H1 (cell line): ENCODE measurements at regions of chr9 and their contacts with region 1.

Region 1: GRCh38 chr9:93682232-93682968 is 106.0 kb downstream of the PHF2 start:
- DNase-seq: peak; percentile 60 to 99
- H3K4me3 ChIP-seq: no peak overlapping the region
- H3K27ac ChIP-seq: peak overlapping the region; percentile 56; the same call in 1 of the 2 replicates
- H3K4me1 ChIP-seq: no peaks in the 10 kb centered on the region
- H3K27me3 ChIP-seq: no peaks in the 10 kb centered on the region
- CTCF ChIP-seq: peak in 2 of 3 experiments; percentile 82 to 92; a peak in 3 of 4 replicates
- EP300 ChIP-seq: peak in 1 of 2 experiments; percentile 66; a peak in 1 of 3 replicates
- POLR2A ChIP-seq: no peak
- RAD21 ChIP-seq: peak; percentile 95 to 98

Region 2: GRCh38 chr9:93697352-93698139 is 15.1 kb after region 1 on chr9:
- CTCF ChIA-PET with region 1: interaction called, 31 read pairs
- POLR2A ChIA-PET with region 1: no interaction called
- DNase-seq: no peak
- H3K4me3 ChIP-seq: no peak overlapping the region
- H3K27ac ChIP-seq: no peak overlapping the region
- H3K4me1 ChIP-seq: no peaks in the 10 kb centered on the region
- H3K27me3 ChIP-seq: no peaks in the 10 kb centered on the region
- CTCF ChIP-seq: no peak
- EP300 ChIP-seq: no peak
- POLR2A ChIP-seq: no peak
- RAD21 ChIP-seq: no peak

Region 3: DNA sequence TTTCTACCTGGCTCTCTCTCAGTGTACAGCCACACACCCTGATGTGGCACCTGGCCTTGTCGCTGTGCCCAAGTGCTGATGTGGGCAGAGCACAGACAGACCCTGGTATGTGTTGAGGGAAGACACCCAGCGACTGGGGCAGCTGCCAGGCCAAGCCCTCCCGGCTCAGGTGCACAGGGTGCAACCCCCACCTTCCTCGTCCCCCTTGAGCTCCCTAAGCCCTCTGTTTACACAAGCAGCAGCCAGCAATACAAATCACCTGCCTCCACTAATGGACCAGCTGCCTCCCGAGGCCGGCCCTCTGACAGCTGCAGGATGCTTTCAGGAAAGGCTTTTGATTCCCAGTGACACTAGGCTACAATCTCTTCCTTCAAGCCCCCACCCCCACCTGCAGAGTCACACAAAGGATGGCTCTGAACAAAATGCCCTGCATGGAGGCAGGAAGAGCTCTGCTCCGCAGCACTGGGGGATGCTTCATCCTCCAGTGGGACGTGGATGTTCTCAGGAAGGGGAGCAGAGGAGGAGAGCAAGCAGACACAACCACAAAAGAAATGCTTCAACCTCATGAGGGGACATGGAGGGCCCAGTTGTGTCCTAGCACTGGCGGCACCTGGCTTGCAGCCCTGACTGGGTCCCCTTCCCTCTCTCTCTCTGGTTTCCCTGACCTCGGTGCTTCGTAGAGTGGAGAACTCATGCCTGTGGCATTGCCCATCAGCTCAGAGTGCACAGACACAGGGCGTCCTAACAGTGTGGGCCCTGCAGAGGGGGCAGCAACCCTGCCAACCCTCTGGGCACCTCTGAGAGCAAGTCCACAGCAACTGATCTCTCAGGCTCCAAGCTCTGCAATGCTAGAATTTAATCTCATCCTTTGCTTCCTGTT is 131.9 kb after region 1 on chr9:
- CTCF ChIA-PET with region 1: interaction called, 33 read pairs
- POLR2A ChIA-PET with region 1: interaction called, 3 read pairs
- DNase-seq: peak in 1 of 2 experiments; percentile 57
- H3K4me3 ChIP-seq: no peak overlapping the region
- H3K27ac ChIP-seq: no peak overlapping the region
- H3K4me1 ChIP-seq: peaks cover 0 to 24% (median 15%) of the 10 kb centered on the region in 4 experiments; a peak in 6 of 7 replicates
- H3K27me3 ChIP-seq: no peaks in the 10 kb centered on the region; a peak in 2 of 7 replicates
- CTCF ChIP-seq: peak; percentile 49 to 66 (median 64)
- EP300 ChIP-seq: no peak
- POLR2A ChIP-seq: no peak
- RAD21 ChIP-seq: peak; percentile 62 to 76

Region 4: DNA sequence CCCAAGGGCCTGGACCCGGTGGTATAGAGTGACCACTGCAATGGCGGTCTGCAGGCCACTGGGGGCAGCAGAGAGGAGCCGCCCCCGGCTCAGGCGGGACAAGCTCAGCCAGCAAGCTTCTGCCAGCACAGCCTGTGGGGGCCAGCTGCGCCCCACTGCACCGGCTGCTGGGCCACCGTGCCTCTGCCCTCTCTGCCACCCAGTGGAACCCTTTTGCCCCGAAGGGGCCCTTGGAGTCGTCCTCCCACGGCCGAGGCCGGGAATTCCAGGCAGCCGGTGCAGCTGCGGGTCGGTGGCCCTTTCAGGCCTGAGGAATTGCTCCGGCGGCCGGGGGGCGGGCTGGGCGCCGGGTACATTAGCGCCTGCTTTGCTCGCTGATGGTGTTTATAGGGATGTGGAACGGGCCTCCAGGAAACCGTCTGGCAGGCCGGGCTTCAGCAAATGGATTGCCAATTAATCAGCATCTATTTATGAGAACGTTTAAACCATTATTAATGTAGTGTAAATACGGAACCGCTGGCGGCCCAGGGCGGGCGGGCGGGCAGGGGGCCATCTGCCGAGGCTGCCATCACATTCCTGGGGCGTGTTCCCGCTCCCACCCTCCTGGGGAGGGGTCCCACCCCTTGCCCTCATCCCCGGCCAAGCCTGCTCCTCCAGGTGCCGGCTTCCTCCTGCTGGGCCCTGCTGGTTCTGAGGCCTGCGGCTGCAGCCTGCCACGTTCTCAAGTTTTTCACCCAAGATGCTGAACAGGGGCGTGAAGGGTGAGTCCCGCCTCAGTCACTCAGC is 145.3 kb after region 1 on chr9:
- CTCF ChIA-PET with region 1: interaction called, 10 read pairs
- POLR2A ChIA-PET with region 1: no interaction called
- DNase-seq: peak in 1 of 2 experiments; percentile 89
- H3K4me3 ChIP-seq: peak overlapping the region in 3 of 4 experiments; percentile 12 to 55 (median 19); a peak in 4 of 8 replicates
- H3K27ac ChIP-seq: no peak overlapping the region
- H3K4me1 ChIP-seq: peaks cover 4 to 15% (median 11%) of the 10 kb centered on the region in 4 experiments; a peak in 6 of 7 replicates
- H3K27me3 ChIP-seq: peaks cover 0 to 9% (median 5%) of the 10 kb centered on the region in 4 experiments; a peak in 3 of 7 replicates
- CTCF ChIP-seq: peak in 2 of 3 experiments; percentile 86 to 92; a peak in 3 of 4 replicates
- EP300 ChIP-seq: no peak
- POLR2A ChIP-seq: no peak
- RAD21 ChIP-seq: peak; percentile 57 to 70

Region 5: DNA sequence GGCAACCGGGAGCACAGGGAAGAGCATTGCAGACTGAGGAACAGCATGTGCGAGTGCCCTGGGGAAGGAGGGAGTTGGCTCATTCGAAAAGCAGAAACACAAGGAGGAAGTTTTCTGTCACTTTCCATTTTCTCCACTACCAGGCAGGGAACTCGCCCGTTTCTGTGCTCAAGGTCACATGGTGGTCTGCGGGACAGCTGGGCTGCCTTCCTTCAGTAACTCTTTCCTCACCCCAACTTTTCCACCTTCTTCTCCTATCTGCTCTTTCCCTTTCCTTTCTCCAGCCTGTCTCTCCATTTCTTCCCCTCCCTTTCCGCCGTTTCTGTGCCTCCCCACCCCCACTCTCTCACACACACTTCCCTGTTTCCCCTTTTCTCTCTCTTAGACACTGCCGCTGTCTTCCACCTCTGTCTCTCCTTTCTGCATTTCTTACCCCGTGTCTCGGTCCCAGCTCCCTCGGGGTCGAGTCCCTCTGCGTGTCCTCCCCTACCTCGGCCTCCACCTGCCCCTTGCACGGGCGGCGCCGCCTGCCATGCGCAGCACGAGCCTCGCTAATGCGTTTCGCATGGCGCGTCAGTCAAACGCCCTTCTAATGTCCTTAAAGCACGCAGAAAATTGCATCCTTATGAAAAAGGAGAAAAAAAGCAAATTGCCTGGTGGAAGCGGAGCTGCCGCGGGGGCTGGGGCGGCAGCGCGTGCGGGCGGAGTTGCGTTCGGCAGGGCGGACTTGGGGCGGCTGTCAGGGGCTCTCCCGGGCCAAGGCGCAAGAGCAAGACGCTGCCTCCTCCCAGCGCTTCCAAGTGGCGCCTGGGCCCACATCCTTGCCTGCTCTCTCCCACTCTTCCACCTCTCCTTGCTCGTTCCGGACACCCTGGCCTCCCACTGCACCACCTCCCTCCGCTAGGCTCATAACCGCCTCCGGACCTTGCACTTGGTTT is 263.3 kb after region 1 on chr9:
- CTCF ChIA-PET with region 1: interaction called, 32 read pairs
- POLR2A ChIA-PET with region 1: interaction called, 4 read pairs
- DNase-seq: no peak
- H3K4me3 ChIP-seq: peak overlapping the region; percentile 9 to 60 (median 33); a peak in 7 of 8 replicates
- H3K27ac ChIP-seq: no peak overlapping the region
- H3K4me1 ChIP-seq: peaks cover 4 to 50% (median 17%) of the 10 kb centered on the region in 4 experiments
- H3K27me3 ChIP-seq: peaks cover 77 to 99% (median 95%) of the 10 kb centered on the region in 4 experiments
- CTCF ChIP-seq: no peak
- EP300 ChIP-seq: no peak
- POLR2A ChIP-seq: no peak
- RAD21 ChIP-seq: no peak

Region 6: DNA sequence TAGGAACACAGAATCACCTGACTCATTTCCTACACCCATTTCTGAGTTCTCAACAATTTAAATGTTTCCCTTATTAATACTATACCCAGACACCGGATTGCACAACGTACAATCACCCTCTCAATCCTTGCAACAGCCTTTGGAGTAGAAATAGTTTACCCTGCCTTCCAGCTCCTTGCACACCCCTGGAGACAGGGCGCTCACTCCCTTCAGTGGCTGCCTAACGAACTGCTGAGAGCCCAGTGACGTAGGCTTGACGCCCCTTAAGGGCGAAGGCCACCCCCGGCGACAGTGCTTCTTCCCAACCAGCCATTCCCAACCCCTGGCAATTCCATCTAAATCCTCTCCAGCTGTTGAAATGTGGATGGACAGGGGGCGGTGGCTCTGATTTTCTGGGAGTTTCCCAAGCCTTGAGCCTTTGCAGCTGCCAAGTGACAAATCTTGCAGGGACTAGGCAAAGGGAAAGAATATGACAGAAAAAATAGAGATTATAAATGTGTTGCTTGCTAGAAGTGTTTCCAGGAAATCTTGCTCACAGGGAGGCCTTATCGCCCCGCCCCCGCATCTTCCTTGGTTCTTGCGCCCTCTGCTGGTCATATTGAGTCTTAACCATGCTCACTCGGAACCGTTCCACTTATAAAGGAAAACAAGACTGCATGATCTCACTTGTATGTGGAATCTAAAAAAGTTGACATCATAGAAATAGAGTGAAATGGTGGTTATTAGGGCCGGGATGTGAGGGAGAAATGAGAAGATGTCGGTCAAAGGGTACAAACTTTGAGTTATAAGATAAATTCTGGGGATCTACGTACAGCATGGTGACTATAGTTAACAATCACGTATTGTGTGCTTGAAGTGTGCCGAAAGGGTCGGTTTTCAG is 280.4 kb after region 1 on chr9:
- CTCF ChIA-PET with region 1: interaction called, 146 read pairs
- POLR2A ChIA-PET with region 1: interaction called, 3 read pairs
- DNase-seq: peak in 1 of 2 experiments; percentile 80
- H3K4me3 ChIP-seq: no peak overlapping the region
- H3K27ac ChIP-seq: no peak overlapping the region
- H3K4me1 ChIP-seq: peaks cover 0 to 21% (median 15%) of the 10 kb centered on the region in 4 experiments; a peak in 6 of 7 replicates
- H3K27me3 ChIP-seq: peaks cover 40 to 51% (median 48%) of the 10 kb centered on the region in 4 experiments
- CTCF ChIP-seq: peak in 2 of 3 experiments; percentile 79 to 80; a peak in 3 of 4 replicates
- EP300 ChIP-seq: no peak
- POLR2A ChIP-seq: no peak
- RAD21 ChIP-seq: peak; percentile 81 to 84